ENCODE measurements at regions of chr12 and their contacts with region 1.

Region 1: DNA sequence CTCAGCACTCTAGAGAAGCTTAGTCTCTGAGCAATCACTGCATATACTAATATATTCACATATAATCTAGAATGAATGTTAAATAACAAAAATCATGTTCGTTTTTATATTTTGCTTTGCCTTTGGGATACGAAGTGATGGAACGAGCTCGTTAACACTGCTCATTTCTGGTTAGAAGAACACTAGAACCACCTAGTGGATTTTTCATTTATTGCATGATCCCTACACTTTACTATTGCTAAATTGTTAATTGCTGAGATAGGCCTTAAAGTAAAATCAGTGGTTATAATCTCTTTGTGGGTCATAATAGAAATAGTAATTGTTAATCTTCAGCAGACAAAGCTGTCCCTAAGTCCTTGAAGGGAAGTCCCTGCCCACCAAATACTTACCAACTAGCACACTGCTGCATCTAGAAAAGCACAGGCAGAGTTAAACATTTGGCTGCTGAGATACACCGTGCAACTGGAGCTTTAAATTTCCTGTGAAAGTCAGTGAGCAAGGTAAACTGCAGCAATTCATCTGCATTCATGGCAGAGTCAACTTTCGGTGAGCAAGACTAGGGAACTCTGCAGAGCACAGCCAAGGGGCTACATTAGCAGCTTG is 353.7 kb downstream of the APAF1 start:
- DNase-seq: no peak

Region 2: DNA sequence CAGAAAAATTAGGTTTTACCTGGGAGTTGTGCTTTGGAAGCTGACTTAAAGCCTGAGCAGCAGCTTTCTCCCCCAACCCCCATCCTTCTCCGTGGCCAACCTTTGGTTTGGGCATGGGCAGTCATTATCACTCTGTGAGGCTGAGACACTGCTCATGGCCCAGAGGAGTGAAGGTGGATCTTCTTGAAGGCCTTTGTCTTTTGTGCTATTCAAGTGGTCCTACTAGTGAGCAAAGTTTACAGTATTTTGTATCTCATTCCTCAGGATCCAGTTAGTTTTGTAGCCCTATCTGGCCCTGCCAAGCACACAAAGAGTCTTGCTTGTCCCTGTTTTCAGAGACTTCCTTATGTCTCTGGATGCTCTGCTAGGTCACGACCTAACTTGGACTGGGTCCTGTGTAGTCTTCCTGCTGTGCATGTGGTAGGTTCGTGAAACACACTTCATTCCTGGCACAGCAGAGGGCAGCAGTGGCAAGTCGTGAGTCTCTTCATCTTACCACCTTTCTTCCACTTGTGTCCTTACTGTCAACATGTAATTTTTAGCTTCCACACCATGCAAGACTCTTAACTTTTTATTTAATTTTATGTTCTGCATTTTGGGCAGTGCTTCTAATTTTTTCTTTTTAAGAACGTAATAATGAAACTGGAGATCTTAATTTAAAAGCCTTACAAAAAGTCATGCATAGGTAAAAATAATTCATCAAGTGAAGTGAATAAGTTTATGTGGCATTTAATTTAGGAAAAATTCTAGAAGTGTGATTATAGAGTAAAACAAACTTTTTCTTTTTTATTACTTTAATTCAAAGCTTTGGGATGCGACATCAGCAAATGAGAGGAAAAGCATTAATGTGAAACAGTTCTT is 300.0 kb before region 1 on chr12:
- intact Hi-C with region 1: loop called (anchors 5 kb)
- DNase-seq: peak; percentile 18 to 91 (median 80)

Region 3: GRCh38 chr12:98725476-98726247 is 273.1 kb before region 1 on chr12:
- intact Hi-C with region 1: loop called (anchors 10 kb)
- DNase-seq: peak; percentile 34 to 91 (median 78)

Region 4: GRCh38 chr12:99529966-99530365 is 531.2 kb after region 1 on chr12:
- intact Hi-C with region 1: no loop called
- DNase-seq: no peak